Dendritic cell treated with granulocyte-macrophage colony-stimulating factor and Interleukin-4, amounts not matched to agents 40 ng/mL and 50 ng/mL, for 4 days (primary cell): ENCODE measurements at regions of chr2 and their contacts with region 1.

Region 1: GRCh38 chr2:233089851-233090250 is 29.7 kb downstream of the INPP5D start:
- H3K4me3 Mint-ChIP-seq: no peak overlapping the region
- H3K27ac Mint-ChIP-seq: peak overlapping the region; percentile 79
- H3K4me1 Mint-ChIP-seq: peaks cover 92% of the 10 kb centered on the region
- H3K27me3 Mint-ChIP-seq: no peaks in the 10 kb centered on the region

Region 2: DNA sequence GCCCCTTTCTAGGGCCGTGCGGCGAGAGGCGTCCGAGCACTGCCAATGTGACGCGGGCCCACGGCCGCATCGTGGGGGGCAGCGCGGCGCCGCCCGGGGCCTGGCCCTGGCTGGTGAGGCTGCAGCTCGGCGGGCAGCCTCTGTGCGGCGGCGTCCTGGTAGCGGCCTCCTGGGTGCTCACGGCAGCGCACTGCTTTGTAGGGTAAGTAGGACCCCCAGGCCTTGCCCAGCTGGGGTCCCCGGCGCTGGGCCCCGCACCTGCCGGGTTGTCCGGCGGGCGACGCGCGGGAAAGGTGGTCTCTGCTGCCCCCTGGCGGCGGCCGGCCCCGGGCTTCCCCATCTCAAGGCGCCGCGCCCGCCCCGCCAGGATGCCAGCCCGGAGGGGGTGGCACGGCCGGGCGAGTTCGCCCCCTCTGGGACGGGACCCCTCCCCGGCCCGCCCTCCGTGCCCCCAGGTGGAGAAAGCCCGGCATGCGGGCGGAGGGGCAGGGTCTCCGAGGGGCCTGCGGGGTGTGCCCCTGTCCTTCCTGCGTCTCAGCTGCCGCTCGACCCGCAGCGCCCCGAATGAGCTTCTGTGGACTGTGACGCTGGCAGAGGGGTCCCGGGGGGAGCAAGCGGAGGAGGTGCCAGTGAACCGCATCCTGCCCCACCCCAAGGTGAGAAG is 567.8 kb before region 1 on chr2:
- intact Hi-C with region 1: no loop called
- H3K4me3 Mint-ChIP-seq: peak overlapping the region; percentile 27
- H3K27ac Mint-ChIP-seq: no peak overlapping the region
- H3K4me1 Mint-ChIP-seq: peaks cover 30% of the 10 kb centered on the region
- H3K27me3 Mint-ChIP-seq: peaks cover 70% of the 10 kb centered on the region

Region 3: GRCh38 chr2:233075966-233076339 is 13.9 kb before region 1 on chr2:
- intact Hi-C with region 1: loop called (anchors 2 kb)
- H3K4me3 Mint-ChIP-seq: no peak overlapping the region
- H3K27ac Mint-ChIP-seq: no peak overlapping the region
- H3K4me1 Mint-ChIP-seq: peaks cover 35% of the 10 kb centered on the region
- H3K27me3 Mint-ChIP-seq: no peaks in the 10 kb centered on the region

Region 4: DNA sequence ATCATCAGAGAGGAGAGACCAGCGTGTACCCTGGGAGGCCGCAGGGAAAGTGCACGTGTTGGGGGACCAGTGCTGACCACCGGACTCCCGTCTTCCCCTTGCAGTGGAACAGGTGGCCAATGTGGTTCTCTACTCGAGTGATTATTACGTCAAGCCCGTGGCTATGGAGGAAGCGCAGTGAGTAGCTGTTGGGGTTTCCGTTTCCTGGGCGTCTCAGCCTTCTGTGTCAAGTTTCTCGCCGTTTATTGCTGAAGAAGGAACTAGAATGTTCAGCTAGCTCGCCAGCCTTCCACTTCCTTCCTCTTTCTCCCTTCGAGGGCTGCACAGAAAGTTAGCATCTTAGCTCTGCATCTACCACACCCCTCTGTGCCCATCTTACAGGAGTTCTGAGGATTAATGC is 241.7 kb after region 1 on chr2:
- intact Hi-C with region 1: no loop called
- H3K4me3 Mint-ChIP-seq: peak overlapping the region; percentile 45
- H3K27ac Mint-ChIP-seq: peak overlapping the region; percentile 93
- H3K4me1 Mint-ChIP-seq: peaks cover 42% of the 10 kb centered on the region
- H3K27me3 Mint-ChIP-seq: no peaks in the 10 kb centered on the region